Transverse colon (tissue), 4 donors: ENCODE measurements at regions of chr3 and their contacts with region 1.

Region 1: GRCh38 chr3:152870027-152870426 is 35.1 kb downstream of the P2RY1 start:
- DNase-seq: no peak
- H3K4me3 ChIP-seq: no peak overlapping the region
- H3K27ac ChIP-seq: no peak overlapping the region
- H3K4me1 ChIP-seq: no peaks in the 10 kb centered on the region
- H3K27me3 ChIP-seq: no peaks in the 10 kb centered on the region
- CTCF ChIP-seq: no peak
- EP300 ChIP-seq: no peak
- POLR2A ChIP-seq: no peak

Region 2: GRCh38 chr3:152159328-152159727 is 710.7 kb before region 1 on chr3:
- in situ Hi-C with region 1: no loop called
- intact Hi-C with region 1: no loop called
- DNase-seq: peak; percentile 15
- H3K4me3 ChIP-seq: no peak overlapping the region
- H3K27ac ChIP-seq: peak overlapping the region; percentile 21 to 44 (median 24)
- H3K4me1 ChIP-seq: peaks cover 0 to 23% (median 5%) of the 10 kb centered on the region in 4 donors
- H3K27me3 ChIP-seq: no peaks in the 10 kb centered on the region
- CTCF ChIP-seq: no peak
- EP300 ChIP-seq: no peak
- POLR2A ChIP-seq: no peak

Region 3: GRCh38 chr3:152508705-152509104 is 361.3 kb before region 1 on chr3:
- in situ Hi-C with region 1: no loop called
- intact Hi-C with region 1: loop called (anchors 10 kb)
- DNase-seq: no peak
- H3K4me3 ChIP-seq: no peak overlapping the region
- H3K27ac ChIP-seq: no peak overlapping the region
- H3K4me1 ChIP-seq: no peaks in the 10 kb centered on the region
- H3K27me3 ChIP-seq: no peaks in the 10 kb centered on the region
- CTCF ChIP-seq: peak; percentile 31 to 43 (median 34)
- EP300 ChIP-seq: no peak
- POLR2A ChIP-seq: no peak

Region 4: DNA sequence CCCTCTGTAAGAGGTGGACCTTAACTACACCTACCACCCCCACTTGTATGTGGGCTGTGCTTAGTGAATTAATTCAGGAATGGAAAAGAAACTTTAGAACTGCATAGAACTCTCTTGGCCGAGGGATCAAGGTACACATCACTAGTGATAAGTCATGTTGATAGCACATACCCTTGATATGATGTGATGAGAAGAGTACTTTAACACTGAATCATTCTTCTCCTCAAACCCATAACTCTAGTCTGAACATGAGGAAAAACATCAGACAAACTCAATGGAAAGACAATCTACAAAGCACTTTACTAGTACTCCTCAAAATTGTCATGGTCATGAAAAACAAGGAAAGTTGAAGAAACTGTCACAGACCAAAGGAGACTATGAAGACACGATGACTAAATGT is 52.5 kb after region 1 on chr3:
- in situ Hi-C with region 1: no loop called
- intact Hi-C with region 1: no loop called
- DNase-seq: no peak
- H3K4me3 ChIP-seq: no peak overlapping the region
- H3K27ac ChIP-seq: no peak overlapping the region
- H3K4me1 ChIP-seq: no peaks in the 10 kb centered on the region
- H3K27me3 ChIP-seq: no peaks in the 10 kb centered on the region
- CTCF ChIP-seq: no peak
- EP300 ChIP-seq: no peak
- POLR2A ChIP-seq: no peak